IMR-90 (cell line): ENCODE measurements at regions of chr17 and their contacts with region 1.

Region 1: DNA sequence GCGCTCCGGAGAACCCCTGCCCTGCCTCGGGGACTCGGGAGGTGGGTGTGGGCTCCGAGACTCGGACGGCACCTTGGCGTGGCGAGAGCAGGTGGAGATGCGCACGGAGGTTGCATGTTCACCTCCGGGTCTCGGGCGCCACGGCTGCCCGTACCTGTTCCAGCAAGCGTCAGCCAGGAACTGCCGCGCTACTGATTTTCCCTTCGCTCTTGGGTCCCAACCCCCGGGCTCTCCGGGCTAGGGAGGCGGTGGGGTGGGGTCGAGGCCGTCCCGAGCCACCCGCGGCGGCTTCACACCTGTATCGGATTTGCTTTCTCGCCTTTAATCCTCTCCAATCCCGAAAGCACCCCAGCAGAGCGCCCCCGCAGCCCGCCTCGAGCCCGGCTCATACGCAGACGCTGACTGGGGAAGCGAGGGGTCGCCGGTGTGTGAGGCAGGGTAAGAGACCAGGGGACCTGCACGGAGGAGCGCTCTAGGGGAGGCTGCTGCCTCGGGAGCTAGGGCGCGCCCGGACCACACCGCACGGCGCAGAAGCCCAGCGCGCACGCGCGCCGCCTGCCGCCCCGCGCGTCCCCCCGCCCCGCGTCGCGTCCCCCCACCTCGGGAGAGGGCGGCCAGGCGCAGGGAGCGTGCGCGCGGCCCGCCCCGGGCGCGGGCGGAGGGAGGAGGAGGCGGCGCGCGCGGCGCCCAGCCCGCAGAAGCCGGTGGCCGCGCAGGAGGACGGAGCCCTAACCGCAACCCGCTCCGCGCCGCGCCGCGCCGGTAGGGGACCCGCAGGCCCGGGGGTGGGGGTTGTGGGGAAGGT is at the start of gene DUSP14:
- DNase-seq: peak; percentile 77
- ATAC-seq: peak; percentile 69
- H3K4me3 ChIP-seq: peak within 1 kb of the TSS; percentile 95
- H3K27ac ChIP-seq: peak within 1 kb of the TSS; percentile 94
- H3K4me1 ChIP-seq: peaks cover 11% of the 10 kb centered on the region
- H3K27me3 ChIP-seq: no peaks in the 10 kb centered on the region
- CTCF ChIP-seq: no peak
- POLR2A ChIP-seq: peak; percentile 78
- RAD21 ChIP-seq: no peak
- total RNA-seq, gene DUSP14: 97.5 and 102 TPM in 2 replicates

Region 2: DNA sequence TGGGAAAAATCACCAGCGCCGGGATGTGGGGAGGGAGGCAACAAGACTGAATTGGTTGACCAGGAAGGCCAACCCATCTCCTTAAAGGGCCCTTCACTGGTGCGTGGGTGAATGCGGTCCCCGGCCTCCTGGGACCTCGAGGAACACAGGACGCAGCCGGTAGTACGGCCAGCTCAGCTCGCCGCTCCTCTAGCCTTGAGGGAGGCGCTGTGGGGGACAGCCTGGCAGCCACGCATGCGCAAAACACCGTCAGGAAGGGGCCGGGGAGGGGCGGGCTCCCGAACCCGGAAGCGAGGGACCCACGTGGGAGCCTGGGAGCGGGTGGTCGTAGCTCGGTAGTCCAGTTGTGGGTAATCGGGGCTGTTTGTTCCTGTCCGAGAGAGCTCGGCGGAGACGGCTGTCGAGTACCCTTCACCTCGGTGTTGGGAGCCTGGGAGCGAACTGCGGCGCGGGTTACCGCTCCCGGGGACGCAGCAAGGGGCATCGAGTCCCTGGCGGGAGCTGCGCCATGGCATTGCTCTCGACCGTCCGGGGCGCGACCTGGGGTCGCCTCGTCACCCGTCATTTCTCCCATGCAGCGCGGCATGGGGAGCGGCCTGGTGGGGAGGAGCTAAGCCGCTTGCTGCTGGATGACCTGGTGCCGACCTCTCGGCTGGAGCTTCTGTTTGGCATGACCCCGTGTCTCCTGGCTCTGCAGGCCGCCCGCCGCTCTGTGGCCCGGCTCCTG is 887.9 kb before region 1 on chr17 and contains the start of gene MRM1:
- CTCF ChIA-PET with region 1: no interaction called
- POLR2A ChIA-PET with region 1: no interaction called
- dilution Hi-C with region 1: no loop called
- in situ Hi-C with region 1: no loop called
- intact Hi-C with region 1: loop called (anchors 5 kb)
- DNase-seq: peak; percentile 89
- ATAC-seq: peak; percentile 93
- H3K4me3 ChIP-seq: peak within 1 kb of the TSS; percentile 79
- H3K27ac ChIP-seq: peak within 1 kb of the TSS; percentile 74
- H3K4me1 ChIP-seq: peaks cover 6% of the 10 kb centered on the region
- H3K27me3 ChIP-seq: no peaks in the 10 kb centered on the region
- CTCF ChIP-seq: peak; percentile 23; the same call in 1 of the 2 replicates
- POLR2A ChIP-seq: peak; percentile 81
- RAD21 ChIP-seq: no peak
- total RNA-seq, gene MRM1: 2.2 TPM in 2 replicates

Region 3: GRCh38 chr17:37406635-37407461 is 82.6 kb before region 1 on chr17 and contains the starts of genes ACACA and TADA2A:
- CTCF ChIA-PET with region 1: no interaction called
- POLR2A ChIA-PET with region 1: no interaction called
- dilution Hi-C with region 1: no loop called
- in situ Hi-C with region 1: no loop called
- intact Hi-C with region 1: loop called (anchors 2 kb)
- DNase-seq: peak; percentile 63
- ATAC-seq: peak; percentile 97
- H3K4me3 ChIP-seq: peak within 1 kb of the TSS; percentile 66
- H3K27ac ChIP-seq: peak within 1 kb of the TSS; percentile 85
- H3K4me1 ChIP-seq: no peaks in the 10 kb centered on the region; the same call in 1 of the 2 replicates
- H3K27me3 ChIP-seq: no peaks in the 10 kb centered on the region
- CTCF ChIP-seq: no peak
- POLR2A ChIP-seq: peak; percentile 81
- RAD21 ChIP-seq: no peak
- total RNA-seq, gene ACACA: 35.3 and 39.1 TPM in 2 replicates
- total RNA-seq, gene TADA2A: 17.2 and 19.7 TPM in 2 replicates

Region 4: DNA sequence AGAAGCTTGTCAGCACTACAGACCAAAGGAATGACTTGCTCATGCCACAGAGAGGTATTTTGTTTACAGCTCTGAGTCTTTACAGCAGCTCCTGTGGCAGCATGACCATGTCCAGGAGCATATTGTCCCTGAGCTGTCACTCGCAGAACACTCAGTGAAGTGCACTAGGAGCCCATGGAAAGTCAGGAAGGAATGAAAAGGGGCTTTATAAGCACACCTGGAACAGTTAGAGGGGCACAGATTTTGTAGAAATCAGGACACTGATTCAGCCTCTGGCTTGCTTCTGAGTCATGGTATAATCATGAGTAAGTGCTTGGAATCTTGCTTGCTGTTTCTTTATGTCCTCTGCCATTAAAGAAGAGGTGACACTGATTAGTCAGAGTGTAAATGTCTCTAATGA is 41.8 kb before region 1 on chr17:
- CTCF ChIA-PET with region 1: no interaction called
- POLR2A ChIA-PET with region 1: no interaction called
- dilution Hi-C with region 1: no loop called
- in situ Hi-C with region 1: no loop called
- intact Hi-C with region 1: loop called (anchors 5 kb)
- DNase-seq: peak; percentile 51
- ATAC-seq: peak; percentile 83
- H3K4me3 ChIP-seq: no peak overlapping the region
- H3K27ac ChIP-seq: no peak overlapping the region
- H3K4me1 ChIP-seq: peaks cover 9% of the 10 kb centered on the region
- H3K27me3 ChIP-seq: no peaks in the 10 kb centered on the region
- CTCF ChIP-seq: no peak
- POLR2A ChIP-seq: no peak
- RAD21 ChIP-seq: no peak

Region 5: GRCh38 chr17:37458805-37459204 is 30.6 kb before region 1 on chr17:
- CTCF ChIA-PET with region 1: no interaction called
- POLR2A ChIA-PET with region 1: no interaction called
- dilution Hi-C with region 1: no loop called
- in situ Hi-C with region 1: no loop called
- intact Hi-C with region 1: no loop called
- DNase-seq: peak; percentile 84
- ATAC-seq: peak; percentile 77
- H3K4me3 ChIP-seq: no peak overlapping the region
- H3K27ac ChIP-seq: 0 out of 2 replicates have a peak overlapping the region, but pooled peaks have one; percentile 5
- H3K4me1 ChIP-seq: peaks cover 5% of the 10 kb centered on the region
- H3K27me3 ChIP-seq: no peaks in the 10 kb centered on the region
- CTCF ChIP-seq: no peak
- POLR2A ChIP-seq: no peak
- RAD21 ChIP-seq: no peak

Region 6: GRCh38 chr17:37818689-37819088 is 329.3 kb after region 1 on chr17:
- CTCF ChIA-PET with region 1: no interaction called
- POLR2A ChIA-PET with region 1: no interaction called
- dilution Hi-C with region 1: no loop called
- in situ Hi-C with region 1: no loop called
- intact Hi-C with region 1: no loop called
- DNase-seq: peak; percentile 89
- ATAC-seq: no peak
- H3K4me3 ChIP-seq: no peak overlapping the region
- H3K27ac ChIP-seq: no peak overlapping the region
- H3K4me1 ChIP-seq: peaks cover 4% of the 10 kb centered on the region
- H3K27me3 ChIP-seq: no peaks in the 10 kb centered on the region
- CTCF ChIP-seq: no peak
- POLR2A ChIP-seq: no peak
- RAD21 ChIP-seq: no peak